Activated CD4-positive, alpha-beta T cell treated with anti-CD3 and anti-CD28 coated beads for 36 hours (primary cell): ENCODE measurements at regions of chr3 and their contacts with region 1.

Region 1: GRCh38 chr3:128617557-128618397 is 32.8 kb downstream of the RPN1 start:
- DNase-seq: peak; percentile 100
- ATAC-seq: peak; percentile 86
- H3K4me3 Mint-ChIP-seq: peak overlapping the region; percentile 92
- H3K27ac Mint-ChIP-seq: peak overlapping the region; percentile 97
- H3K4me1 Mint-ChIP-seq: peaks cover 33% of the 10 kb centered on the region
- H3K27me3 Mint-ChIP-seq: no peaks in the 10 kb centered on the region

Region 2: DNA sequence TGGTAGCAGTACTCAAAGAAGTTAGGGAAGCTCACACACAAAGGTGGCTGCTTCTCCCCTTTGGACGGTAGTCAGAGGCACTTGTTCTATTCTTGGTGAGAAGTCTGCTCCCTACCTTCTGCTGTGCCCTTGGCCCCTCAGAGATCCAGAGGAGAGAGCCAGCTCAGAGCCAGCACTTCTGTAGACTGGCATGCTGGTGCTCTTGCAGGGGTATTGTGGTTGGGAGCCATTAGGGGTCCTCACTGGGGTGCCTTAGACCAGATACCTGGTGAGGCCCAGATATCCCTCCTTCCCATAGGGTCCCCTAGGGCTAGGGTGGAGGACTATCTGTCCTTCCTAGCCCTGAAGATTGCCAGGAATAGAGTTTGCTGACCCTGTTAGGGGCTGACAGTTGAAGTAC is 323.8 kb before region 1 on chr3:
- CTCF ChIA-PET with region 1: no interaction called
- POLR2A ChIA-PET with region 1: no interaction called
- intact Hi-C with region 1: no loop called
- DNase-seq: no peak
- ATAC-seq: no peak
- H3K4me3 Mint-ChIP-seq: no peak overlapping the region
- H3K27ac Mint-ChIP-seq: peak overlapping the region; percentile 49
- H3K4me1 Mint-ChIP-seq: peaks cover 46% of the 10 kb centered on the region
- H3K27me3 Mint-ChIP-seq: no peaks in the 10 kb centered on the region

Region 3: GRCh38 chr3:128572644-128573105 is 45.1 kb before region 1 on chr3:
- CTCF ChIA-PET with region 1: interaction called, 3 read pairs
- POLR2A ChIA-PET with region 1: no interaction called
- intact Hi-C with region 1: loop called in 1 of 2 experiments (anchors 1 kb)
- DNase-seq: peak; percentile 79
- ATAC-seq: peak; percentile 82
- H3K4me3 Mint-ChIP-seq: no peak overlapping the region
- H3K27ac Mint-ChIP-seq: peak overlapping the region; percentile 9
- H3K4me1 Mint-ChIP-seq: peaks cover 17% of the 10 kb centered on the region
- H3K27me3 Mint-ChIP-seq: peaks cover 11% of the 10 kb centered on the region

Region 4: GRCh38 chr3:128680602-128681368 is 63.0 kb after region 1 on chr3:
- CTCF ChIA-PET with region 1: interaction called, 13 read pairs
- POLR2A ChIA-PET with region 1: interaction called, 5 read pairs
- intact Hi-C with region 1: loop called (anchors 1 to 2 kb)
- DNase-seq: peak; percentile 98
- ATAC-seq: peak; percentile 98
- H3K4me3 Mint-ChIP-seq: peak overlapping the region; percentile 96
- H3K27ac Mint-ChIP-seq: peak overlapping the region; percentile 99
- H3K4me1 Mint-ChIP-seq: peaks cover 31% of the 10 kb centered on the region
- H3K27me3 Mint-ChIP-seq: no peaks in the 10 kb centered on the region

Region 5: GRCh38 chr3:128794770-128795649 is 177.2 kb after region 1 on chr3:
- CTCF ChIA-PET with region 1: interaction called, 10 read pairs
- POLR2A ChIA-PET with region 1: no interaction called
- intact Hi-C with region 1: loop called in 1 of 2 experiments (anchors 2 kb)
- DNase-seq: peak; percentile 76
- ATAC-seq: peak; percentile 68
- H3K4me3 Mint-ChIP-seq: peak overlapping the region; percentile 37
- H3K27ac Mint-ChIP-seq: peak overlapping the region; percentile 95
- H3K4me1 Mint-ChIP-seq: peaks cover 91% of the 10 kb centered on the region
- H3K27me3 Mint-ChIP-seq: no peaks in the 10 kb centered on the region

Region 6: DNA sequence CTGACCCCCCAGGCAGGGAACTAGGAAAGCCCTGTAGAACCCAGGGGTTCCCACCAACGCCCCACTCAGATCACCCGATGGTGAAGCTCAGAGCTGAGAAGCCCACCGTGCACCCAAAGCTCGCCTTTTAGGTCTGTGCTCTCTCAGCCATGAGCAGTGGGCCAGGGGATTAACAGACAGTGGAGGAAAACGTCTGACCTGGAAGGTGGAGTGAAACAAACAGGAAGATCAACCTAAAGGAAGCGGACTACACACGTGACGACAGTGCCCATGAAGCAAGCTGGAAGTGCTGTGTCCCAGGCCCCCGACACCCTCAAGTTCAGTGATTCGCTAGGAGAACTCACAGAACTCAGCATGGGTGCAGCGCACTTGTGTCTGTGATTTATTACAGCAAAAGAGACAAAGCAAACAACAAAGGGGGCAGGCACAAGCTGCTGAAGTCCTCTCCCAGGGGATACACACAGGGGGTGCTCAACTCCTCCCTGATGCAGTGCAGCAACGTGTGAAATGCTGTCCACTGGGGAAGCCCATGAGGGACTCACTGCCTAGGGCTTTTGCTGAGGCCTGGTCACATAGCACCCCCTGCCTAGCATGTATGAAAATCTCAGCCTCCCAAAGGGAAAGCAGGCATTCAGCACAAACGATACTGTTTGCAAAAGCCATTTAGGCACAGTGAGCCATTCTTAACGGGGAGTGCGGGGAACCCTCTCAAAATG is 332.6 kb after region 1 on chr3:
- CTCF ChIA-PET with region 1: no interaction called
- POLR2A ChIA-PET with region 1: no interaction called
- intact Hi-C with region 1: loop called in 1 of 2 experiments (anchors 5 kb)
- DNase-seq: peak; percentile 61
- ATAC-seq: peak; percentile 89
- H3K4me3 Mint-ChIP-seq: no peak overlapping the region
- H3K27ac Mint-ChIP-seq: no peak overlapping the region
- H3K4me1 Mint-ChIP-seq: no peaks in the 10 kb centered on the region
- H3K27me3 Mint-ChIP-seq: no peaks in the 10 kb centered on the region

Region 7: GRCh38 chr3:129249276-129250065 is 631.7 kb after region 1 on chr3 and contains the start of gene COPG1:
- CTCF ChIA-PET with region 1: no interaction called
- POLR2A ChIA-PET with region 1: no interaction called
- intact Hi-C with region 1: loop called in 1 of 2 experiments (anchors 5 kb)
- DNase-seq: peak; percentile 91
- ATAC-seq: peak; percentile 92
- H3K4me3 Mint-ChIP-seq: peak within 1 kb of the TSS; percentile 96
- H3K27ac Mint-ChIP-seq: peak within 1 kb of the TSS; percentile 96
- H3K4me1 Mint-ChIP-seq: peaks cover 32% of the 10 kb centered on the region
- H3K27me3 Mint-ChIP-seq: no peaks in the 10 kb centered on the region
- total RNA-seq, gene COPG1: 120 to 142 TPM